MCF 10A (cell line): ENCODE measurements at regions of chr12 and their contacts with region 1.

Region 1: DNA sequence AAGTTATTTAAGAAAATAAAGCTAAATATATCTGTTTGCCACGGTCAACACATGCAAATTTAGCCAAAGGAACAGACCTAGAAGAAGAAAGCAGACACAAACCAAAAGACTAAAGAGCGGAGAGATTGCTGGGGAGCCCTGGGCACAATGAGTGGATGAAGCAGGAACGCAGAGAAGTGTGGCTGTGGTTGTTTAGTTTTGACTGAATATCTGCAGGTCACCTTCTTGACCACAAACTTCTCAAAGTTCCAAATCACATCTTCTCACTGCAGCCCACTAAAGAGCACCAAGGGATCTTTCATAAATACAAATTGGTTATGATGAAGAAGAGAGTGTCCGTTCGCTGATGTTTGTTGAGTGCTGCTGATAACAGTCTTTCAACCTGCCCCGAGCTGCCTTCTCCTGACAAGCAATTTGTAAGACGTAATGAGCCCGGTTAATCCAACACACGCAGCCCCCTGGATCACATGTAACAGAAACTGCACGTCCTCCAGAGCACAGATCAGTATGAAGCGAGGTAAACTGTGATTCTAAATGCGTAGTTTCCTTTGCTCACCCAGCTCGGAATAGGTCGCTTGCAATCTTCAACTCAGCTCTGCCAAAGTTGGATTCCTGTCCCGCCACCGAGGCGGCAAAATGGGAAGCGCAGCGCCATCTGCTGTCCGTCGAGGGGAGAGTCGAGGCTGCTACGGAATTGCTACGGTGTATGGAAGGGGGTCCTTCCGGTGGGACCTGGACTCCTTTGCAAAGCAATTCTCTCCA is 120.8 kb downstream of the GXYLT1 start:
- DNase-seq: peak; percentile 74
- H3K4me3 Mint-ChIP-seq: peak overlapping the region; percentile 46
- H3K27ac Mint-ChIP-seq: no peak overlapping the region
- H3K4me1 Mint-ChIP-seq: peaks cover 7% of the 10 kb centered on the region
- H3K27me3 Mint-ChIP-seq: no peaks in the 10 kb centered on the region
- CTCF ChIP-seq: peak; percentile 95

Region 2: DNA sequence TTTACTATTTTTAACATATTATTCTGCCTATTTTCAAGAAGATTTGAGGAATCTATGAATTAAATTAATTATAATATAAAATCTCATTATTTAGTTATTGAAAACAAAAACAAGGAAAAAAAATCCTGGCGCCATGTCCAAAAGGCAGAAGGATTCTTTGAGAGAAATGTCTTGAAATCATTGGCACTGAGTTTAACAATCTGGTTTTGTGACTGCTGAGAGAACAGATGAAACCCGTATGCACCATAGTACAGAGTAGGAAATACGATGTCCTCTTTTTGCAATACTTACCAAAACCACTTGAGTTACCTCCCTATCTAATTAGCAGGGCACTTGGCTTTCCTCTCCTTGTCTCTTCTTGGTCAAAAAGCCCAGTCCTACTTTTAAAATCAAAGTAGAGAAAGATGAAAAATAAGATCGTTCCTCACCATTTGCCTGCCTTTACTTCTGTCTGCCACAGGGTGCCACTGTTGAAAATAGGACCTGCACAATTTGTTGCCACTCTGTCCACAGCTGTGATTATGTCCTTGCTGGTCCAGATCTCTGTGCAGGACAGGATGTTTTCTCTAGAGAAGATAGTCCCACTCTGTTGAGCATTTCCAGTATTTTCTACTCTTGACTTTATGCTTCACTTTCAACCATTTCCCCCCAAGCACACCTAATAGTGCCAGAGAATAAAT is 656.0 kb before region 1 on chr12:
- CTCF ChIA-PET with region 1: interaction called, 9 read pairs
- POLR2A ChIA-PET with region 1: no interaction called
- intact Hi-C with region 1: loop called (anchors 10 kb)
- DNase-seq: peak; percentile 24
- H3K4me3 Mint-ChIP-seq: no peak overlapping the region
- H3K27ac Mint-ChIP-seq: no peak overlapping the region
- H3K4me1 Mint-ChIP-seq: no peaks in the 10 kb centered on the region
- H3K27me3 Mint-ChIP-seq: peaks cover 33% of the 10 kb centered on the region
- CTCF ChIP-seq: peak; percentile 21

Region 3: DNA sequence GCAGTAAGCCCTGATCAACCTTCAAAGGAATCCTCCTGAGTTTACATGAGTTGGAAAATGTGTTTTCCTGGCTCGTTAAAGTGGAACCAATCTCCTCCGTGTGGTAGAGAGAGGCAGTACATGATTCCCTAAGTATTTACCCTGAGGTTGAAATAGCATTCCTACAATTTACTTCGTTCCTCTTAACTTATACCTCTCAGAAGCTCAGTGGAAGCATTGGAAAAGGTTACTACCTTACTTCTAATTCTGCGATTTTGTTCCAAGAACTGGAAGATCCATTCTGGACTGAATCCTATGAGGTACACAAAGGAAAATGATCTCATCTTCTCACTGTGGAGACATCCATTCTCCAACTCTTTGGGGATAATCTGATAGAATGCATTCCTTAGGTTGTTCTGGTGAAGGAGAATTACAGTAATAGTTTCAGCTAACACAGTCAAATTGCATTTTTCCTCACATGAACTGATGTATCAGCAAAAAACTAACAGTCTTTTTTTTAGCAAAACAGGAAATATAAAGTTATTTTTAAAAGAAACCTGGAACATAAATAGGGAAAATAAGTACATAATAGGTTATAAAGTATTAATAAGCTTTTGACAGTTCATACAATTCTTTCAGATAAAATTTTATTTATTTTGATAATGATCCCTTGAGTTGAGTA is 360.2 kb before region 1 on chr12:
- CTCF ChIA-PET with region 1: interaction called, 10 read pairs
- POLR2A ChIA-PET with region 1: no interaction called
- intact Hi-C with region 1: no loop called
- DNase-seq: peak; percentile 24
- H3K4me3 Mint-ChIP-seq: no peak overlapping the region
- H3K27ac Mint-ChIP-seq: no peak overlapping the region
- H3K4me1 Mint-ChIP-seq: no peaks in the 10 kb centered on the region
- H3K27me3 Mint-ChIP-seq: no peaks in the 10 kb centered on the region
- CTCF ChIP-seq: peak; percentile 26

Region 4: DNA sequence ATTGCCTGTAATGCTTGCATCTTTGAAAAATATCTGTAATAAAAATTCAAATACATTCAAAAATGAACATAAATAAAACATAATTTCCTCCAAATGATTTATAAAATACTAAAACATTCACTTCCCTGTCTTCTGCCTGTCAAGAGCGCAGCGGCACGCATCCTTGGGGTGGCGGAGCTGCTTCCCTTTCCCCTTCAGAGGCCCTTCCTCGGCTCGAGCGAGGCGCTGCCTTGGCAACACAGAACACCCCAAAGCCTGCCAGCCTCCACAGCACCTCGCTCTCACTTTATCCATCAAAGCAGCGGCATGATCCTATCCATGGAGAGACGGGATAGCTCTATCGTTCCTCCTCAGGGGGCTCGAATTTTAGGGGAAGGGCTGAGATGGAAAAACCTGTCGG is 25.5 kb before region 1 on chr12:
- CTCF ChIA-PET with region 1: interaction called, 12 read pairs
- POLR2A ChIA-PET with region 1: no interaction called
- intact Hi-C with region 1: no loop called
- DNase-seq: no peak
- H3K4me3 Mint-ChIP-seq: no peak overlapping the region
- H3K27ac Mint-ChIP-seq: no peak overlapping the region
- H3K4me1 Mint-ChIP-seq: no peaks in the 10 kb centered on the region
- H3K27me3 Mint-ChIP-seq: peaks cover 26% of the 10 kb centered on the region
- CTCF ChIP-seq: no peak

Region 5: DNA sequence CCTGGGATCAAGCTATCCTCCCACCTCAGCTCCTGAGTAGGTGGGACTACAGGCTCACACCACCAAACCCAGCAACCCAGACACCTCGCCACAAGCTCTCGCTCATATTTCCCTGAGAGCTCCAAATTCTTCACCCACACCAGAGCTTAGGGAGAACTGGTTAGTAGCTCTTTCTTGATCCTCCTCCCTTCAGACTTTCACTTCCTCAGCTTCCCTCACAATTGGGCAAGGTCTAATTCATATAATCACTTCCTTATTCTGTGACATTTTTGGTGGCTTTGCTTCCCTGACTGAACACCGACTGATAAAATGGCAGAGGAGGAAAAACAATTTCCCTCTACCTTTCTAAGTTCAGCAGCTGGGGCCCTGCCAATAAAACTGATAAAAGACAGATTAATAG is 32.2 kb after region 1 on chr12:
- CTCF ChIA-PET with region 1: interaction called, 10 read pairs
- POLR2A ChIA-PET with region 1: no interaction called
- intact Hi-C with region 1: no loop called
- DNase-seq: no peak
- H3K4me3 Mint-ChIP-seq: no peak overlapping the region
- H3K27ac Mint-ChIP-seq: no peak overlapping the region
- H3K4me1 Mint-ChIP-seq: no peaks in the 10 kb centered on the region
- H3K27me3 Mint-ChIP-seq: no peaks in the 10 kb centered on the region
- CTCF ChIP-seq: no peak

Region 6: GRCh38 chr12:42261708-42262107 is 237.8 kb after region 1 on chr12:
- CTCF ChIA-PET with region 1: no interaction called
- POLR2A ChIA-PET with region 1: no interaction called
- intact Hi-C with region 1: no loop called
- DNase-seq: no peak
- H3K4me3 Mint-ChIP-seq: no peak overlapping the region
- H3K27ac Mint-ChIP-seq: no peak overlapping the region
- H3K4me1 Mint-ChIP-seq: no peaks in the 10 kb centered on the region
- H3K27me3 Mint-ChIP-seq: peaks cover 17% of the 10 kb centered on the region
- CTCF ChIP-seq: no peak